Vagina (tissue), 2 donors: ENCODE measurements at regions of chr5 and their contacts with region 1.

Region 1: DNA sequence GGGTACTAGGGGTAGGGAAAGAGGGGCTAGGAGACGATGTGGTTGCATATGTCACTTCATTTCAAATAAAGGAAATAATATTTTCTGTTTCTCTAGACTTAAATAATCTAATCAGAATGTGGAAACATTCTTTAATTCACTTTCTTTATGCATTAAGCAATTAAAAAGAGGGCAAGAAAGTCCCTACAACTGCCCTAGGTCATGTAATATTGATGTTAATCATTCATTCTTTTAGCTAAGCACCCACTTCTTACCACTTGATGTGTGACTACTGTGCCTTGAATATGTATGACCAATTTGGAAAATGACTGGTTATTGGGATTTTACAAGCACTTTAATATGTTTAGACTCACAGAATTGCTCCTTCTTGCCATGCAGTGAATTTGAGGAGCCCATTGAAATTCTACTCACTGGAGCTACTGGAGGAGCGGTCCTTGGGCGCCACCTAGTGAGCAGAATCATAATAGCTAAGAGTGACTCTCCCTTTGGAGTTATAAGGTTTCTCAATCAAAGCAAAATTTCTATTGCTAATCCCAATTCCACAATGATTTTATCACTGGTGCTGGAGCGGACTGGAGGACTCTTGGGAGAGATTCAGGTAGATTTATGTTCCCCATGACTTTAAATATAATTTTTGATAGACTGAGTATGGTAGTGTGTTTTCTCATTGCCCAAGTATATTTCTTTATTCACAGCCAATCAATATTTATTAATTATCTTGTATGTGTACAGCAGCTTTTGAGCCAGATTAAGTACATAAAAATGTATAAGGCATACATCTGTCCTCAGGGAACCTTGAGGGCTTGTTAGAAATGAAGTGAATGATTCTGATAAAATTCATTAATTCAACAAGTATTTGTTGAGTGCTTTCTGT is 225.1 kb downstream of the ADGRV1 start:
- DNase-seq: no peak
- H3K4me3 ChIP-seq: no peak overlapping the region
- H3K27ac ChIP-seq: no peak overlapping the region
- H3K4me1 ChIP-seq: no peaks in the 10 kb centered on the region
- H3K27me3 ChIP-seq: no peaks in the 10 kb centered on the region
- CTCF ChIP-seq: peak; percentile 49 to 63 (median 56)
- POLR2A ChIP-seq: no peak

Region 2: DNA sequence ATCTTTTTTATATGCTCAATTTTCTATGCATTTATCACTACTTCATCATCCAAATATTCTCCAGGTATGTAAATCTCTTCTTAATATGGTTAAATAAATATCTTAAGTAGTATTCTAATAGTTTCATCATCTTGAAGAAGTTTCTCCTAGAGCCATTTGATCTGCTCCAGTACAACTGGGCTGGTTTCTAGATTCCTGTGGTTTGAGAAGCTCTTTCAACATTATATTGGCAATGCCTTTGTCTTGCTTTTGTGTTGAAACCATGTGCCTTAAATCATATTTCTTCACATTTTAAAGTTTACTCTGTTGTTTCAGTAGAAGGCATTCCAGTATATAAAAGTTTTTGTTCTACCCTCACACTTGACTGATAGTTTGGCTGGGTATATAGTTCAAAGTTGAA is 336.7 kb before region 1 on chr5:
- intact Hi-C with region 1: loop called (anchors 10 kb)
- DNase-seq: no peak
- H3K4me3 ChIP-seq: no peak overlapping the region
- H3K27ac ChIP-seq: no peak overlapping the region
- H3K4me1 ChIP-seq: no peaks in the 10 kb centered on the region
- H3K27me3 ChIP-seq: no peaks in the 10 kb centered on the region
- CTCF ChIP-seq: no peak
- POLR2A ChIP-seq: no peak

Region 3: GRCh38 chr5:90747175-90747574 is 36.5 kb before region 1 on chr5:
- intact Hi-C with region 1: no loop called
- DNase-seq: no peak
- H3K4me3 ChIP-seq: no peak overlapping the region
- H3K27ac ChIP-seq: no peak overlapping the region
- H3K4me1 ChIP-seq: no peaks in the 10 kb centered on the region
- H3K27me3 ChIP-seq: no peaks in the 10 kb centered on the region
- CTCF ChIP-seq: no peak
- POLR2A ChIP-seq: no peak